RWPE1 (cell line): ENCODE measurements at regions of chr19 and their contacts with region 1.

Region 1: DNA sequence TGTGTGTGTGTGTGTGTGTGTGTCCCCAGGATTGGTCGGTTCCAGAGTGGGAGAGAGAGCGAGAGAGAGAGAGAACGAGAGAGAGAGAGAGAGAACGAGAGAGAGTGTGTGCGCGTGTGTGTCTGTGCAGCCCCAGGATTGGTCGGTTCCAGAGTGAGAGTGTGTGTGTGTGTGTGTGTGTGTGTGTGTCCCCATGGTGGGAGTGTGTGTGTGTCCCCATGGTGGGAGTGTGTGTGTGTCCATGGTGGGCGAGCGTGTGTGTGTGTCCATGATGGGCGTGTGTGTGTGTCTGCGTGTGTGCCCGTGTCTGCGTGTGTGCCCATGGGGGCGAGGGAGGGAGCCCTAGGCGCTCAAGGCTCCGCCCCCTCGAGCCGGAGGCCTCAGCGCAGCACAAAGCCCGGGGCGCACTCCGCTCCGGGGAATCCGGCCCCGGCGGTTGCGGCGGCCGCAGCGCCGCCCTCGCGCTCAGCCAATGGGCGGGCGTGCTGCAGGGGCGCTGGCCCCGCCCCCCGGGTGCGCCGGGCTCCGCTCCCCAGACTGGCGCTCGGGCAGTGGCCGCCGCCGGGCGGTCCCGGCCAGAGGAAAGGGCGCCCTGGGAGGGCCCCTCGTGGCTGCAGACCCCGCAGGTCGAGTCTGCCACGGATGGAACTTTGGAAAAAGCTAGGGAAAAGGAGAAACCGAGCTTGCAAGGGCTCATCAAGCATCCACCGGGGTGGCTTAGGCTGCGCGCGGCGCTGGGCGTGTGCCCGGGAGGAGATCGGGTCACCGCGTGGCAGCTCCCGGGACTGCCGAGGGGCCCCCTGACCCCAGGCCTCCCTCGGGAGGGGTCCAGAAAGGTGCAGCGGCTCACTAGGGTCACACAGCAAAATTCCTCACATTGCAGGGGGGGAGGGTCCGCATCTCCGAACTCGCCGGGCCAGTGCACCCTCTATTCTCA is 96.2 kb downstream of the INSR start:
- DNase-seq: peak; percentile 94
- H3K27ac ChIP-seq: peak overlapping the region; percentile 69
- CTCF ChIP-seq: no peak

Region 2: GRCh38 chr19:5436106-5436947 is 1761.7 kb before region 1 on chr19:
- CTCF ChIA-PET with region 1: no interaction called
- POLR2A ChIA-PET with region 1: no interaction called
- DNase-seq: peak; percentile 72
- H3K27ac ChIP-seq: no peak overlapping the region
- CTCF ChIP-seq: no peak

Region 3: DNA sequence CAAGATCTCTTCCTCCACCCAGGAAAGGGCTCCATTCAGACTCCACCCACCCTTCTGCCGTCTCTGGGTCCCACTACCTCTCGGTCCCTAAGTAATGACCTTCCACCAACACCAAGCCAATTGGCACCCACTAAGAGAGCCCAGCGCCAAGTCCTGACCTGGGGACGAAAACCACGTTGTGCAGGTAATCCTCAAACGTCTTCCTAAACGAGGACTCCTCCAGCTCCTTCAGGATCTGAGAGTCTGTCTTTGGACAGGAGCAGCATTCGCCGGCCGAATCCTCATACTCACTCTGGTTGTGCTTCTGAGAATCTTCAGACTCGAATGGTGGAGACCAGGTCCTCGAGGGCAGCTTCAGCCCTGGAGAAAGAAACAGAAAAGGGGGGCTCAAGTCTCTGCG is 45.5 kb before region 1 on chr19:
- CTCF ChIA-PET with region 1: no interaction called
- POLR2A ChIA-PET with region 1: no interaction called
- DNase-seq: no peak
- H3K27ac ChIP-seq: no peak overlapping the region
- CTCF ChIP-seq: no peak

Region 4: DNA sequence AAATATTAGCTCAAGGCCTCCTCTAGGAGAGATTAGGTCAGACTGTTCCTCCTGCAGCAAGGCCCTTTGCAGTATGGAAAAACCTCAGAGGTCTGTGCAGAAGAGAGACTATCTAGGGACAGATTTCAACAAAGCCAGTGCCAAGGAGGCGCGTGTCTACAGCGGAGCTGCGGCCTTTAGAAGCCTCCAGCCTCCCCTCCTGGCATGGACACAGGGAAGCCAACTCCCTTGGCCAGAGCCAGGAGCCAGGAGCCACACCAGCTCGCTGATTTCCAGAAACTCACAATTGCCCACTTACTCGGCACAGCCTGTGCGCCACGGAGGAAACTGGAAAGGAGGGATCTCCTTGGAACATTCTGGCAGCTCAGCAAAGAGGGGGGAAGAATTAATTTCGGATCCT is 32.8 kb after region 1 on chr19:
- CTCF ChIA-PET with region 1: no interaction called
- POLR2A ChIA-PET with region 1: no interaction called
- DNase-seq: no peak
- H3K27ac ChIP-seq: no peak overlapping the region
- CTCF ChIP-seq: no peak

Region 5: GRCh38 chr19:7265963-7266362 is 67.9 kb after region 1 on chr19:
- CTCF ChIA-PET with region 1: no interaction called
- POLR2A ChIA-PET with region 1: interaction called, 10 read pairs
- DNase-seq: no peak
- H3K27ac ChIP-seq: no peak overlapping the region
- CTCF ChIP-seq: no peak

Region 6: GRCh38 chr19:7326105-7326877 is 128.3 kb after region 1 on chr19:
- CTCF ChIA-PET with region 1: no interaction called
- POLR2A ChIA-PET with region 1: no interaction called
- DNase-seq: no peak
- H3K27ac ChIP-seq: no peak overlapping the region
- CTCF ChIP-seq: peak; percentile 36